ENCODE measurements at regions of chr2 and their contacts with region 1.

Region 1: GRCh38 chr2:209423562-209424198 is at the start of gene MAP2:
- DNase-seq: peak; percentile 96
- H3K4me3 ChIP-seq: peak within 1 kb of the TSS; percentile 93 to 94
- H3K27ac ChIP-seq: peak within 1 kb of the TSS; percentile 24 to 53; a peak in 2 of 4 replicates
- H3K4me1 ChIP-seq: peaks cover 0 to 4% of the 10 kb centered on the region in 2 experiments; a peak in 3 of 4 replicates
- H3K27me3 ChIP-seq: no peaks in the 10 kb centered on the region
- CTCF ChIP-seq: peak; percentile 66
- EP300 ChIP-seq: no peak; a peak in 1 of 4 replicates
- RAD21 ChIP-seq: peak; percentile 63
- polyA plus RNA-seq, gene MAP2: 7.8 and 11.1 TPM in 2 replicates

Region 2: DNA sequence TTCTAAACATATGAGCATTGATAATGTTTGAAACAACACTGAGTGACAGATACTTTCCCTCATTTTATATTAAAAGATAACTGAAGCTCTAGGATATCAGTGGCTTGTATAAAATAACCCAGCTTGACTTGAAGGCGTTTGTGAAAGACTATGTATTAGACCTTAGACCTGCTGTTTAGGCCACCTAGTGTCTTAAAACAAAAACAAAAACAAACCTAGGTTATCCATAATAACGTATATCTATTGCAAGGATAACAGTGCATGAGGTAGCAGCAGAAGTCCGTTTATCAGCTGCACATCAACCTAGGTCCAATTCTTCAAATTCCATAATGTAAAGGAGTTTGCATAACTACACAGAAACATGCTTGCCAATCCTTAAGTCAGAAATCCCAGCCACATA is 79.3 kb before region 1 on chr2:
- CTCF ChIA-PET with region 1: interaction called, 12 read pairs
- POLR2A ChIA-PET with region 1: no interaction called
- DNase-seq: no peak
- H3K4me3 ChIP-seq: no peak overlapping the region
- H3K27ac ChIP-seq: no peak overlapping the region
- H3K4me1 ChIP-seq: no peaks in the 10 kb centered on the region; a peak in 2 of 4 replicates
- H3K27me3 ChIP-seq: no peaks in the 10 kb centered on the region
- CTCF ChIP-seq: no peak
- EP300 ChIP-seq: no peak
- RAD21 ChIP-seq: no peak

Region 3: DNA sequence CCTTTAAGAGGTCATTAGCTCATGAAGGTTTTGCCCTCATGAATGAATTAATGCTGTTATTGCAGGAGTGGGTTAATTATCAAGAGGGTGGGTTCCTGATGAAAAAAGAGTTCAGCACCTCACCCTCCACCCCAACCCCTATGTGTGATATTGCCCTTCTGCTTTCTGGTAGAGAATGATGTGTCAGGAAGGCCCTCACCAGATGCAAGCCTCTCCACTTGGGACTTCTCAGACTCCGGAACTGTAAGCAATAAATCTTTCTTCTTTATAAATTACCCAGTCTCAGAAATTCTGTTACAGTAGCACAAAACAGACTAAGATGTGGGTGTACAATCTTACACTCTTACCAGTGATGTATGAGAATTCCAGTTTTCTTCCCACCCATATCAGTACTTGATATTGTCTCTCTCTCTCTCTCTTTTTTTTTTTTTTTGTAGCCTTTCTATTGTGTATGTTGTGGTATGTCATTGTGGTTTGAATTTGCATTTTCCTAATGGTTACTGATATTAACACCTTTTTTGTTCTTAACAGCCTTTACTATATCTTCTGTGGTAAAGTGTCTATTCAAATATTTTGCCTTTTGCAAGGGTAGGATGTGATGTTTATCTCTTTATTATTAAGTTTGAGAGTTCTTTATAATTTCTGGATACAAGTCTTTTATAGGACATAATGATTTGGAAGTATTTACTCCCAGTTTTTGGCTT is 10.2 kb before region 1 on chr2:
- CTCF ChIA-PET with region 1: interaction called, 20 read pairs
- POLR2A ChIA-PET with region 1: no interaction called
- DNase-seq: no peak
- H3K4me3 ChIP-seq: no peak overlapping the region
- H3K27ac ChIP-seq: no peak overlapping the region
- H3K4me1 ChIP-seq: no peaks in the 10 kb centered on the region
- H3K27me3 ChIP-seq: no peaks in the 10 kb centered on the region
- CTCF ChIP-seq: no peak
- EP300 ChIP-seq: no peak
- RAD21 ChIP-seq: no peak

Region 4: GRCh38 chr2:209451209-209451834 is 27.6 kb after region 1 on chr2:
- CTCF ChIA-PET with region 1: interaction called, 11 read pairs
- POLR2A ChIA-PET with region 1: no interaction called
- DNase-seq: no peak
- H3K4me3 ChIP-seq: no peak overlapping the region
- H3K27ac ChIP-seq: no peak overlapping the region
- H3K4me1 ChIP-seq: no peaks in the 10 kb centered on the region; a peak in 1 of 4 replicates
- H3K27me3 ChIP-seq: no peaks in the 10 kb centered on the region
- CTCF ChIP-seq: no peak
- EP300 ChIP-seq: no peak
- RAD21 ChIP-seq: no peak

Region 5: DNA sequence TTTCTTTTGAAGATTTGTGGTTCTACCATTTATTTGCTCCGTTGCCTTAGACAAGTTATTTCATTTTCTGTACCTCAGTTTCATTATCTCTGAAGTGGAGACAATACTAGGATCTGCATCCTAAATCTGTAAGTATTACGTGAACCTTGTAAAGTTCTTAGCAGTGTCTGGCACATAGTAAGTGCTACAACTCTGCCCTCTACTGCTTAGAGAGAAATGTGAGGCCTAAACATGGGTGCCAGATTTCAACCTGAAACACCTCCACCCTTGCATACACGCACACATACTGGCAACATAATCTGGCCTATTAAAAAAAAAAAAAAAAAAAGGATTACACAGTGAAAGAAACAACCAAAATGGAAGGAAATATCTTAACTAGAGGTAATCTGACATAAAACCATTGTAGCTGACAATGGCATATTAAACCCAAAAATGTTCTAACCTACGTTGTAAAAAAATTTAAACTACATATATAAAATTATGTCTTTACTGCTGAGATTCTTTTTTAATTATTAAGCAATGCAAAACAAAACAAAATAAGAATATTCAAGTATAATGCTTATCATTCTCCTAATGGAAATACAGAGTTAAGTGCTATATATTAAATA is 132.8 kb after region 1 on chr2:
- CTCF ChIA-PET with region 1: interaction called, 22 read pairs
- POLR2A ChIA-PET with region 1: interaction called, 3 read pairs
- DNase-seq: peak; percentile 27
- H3K4me3 ChIP-seq: no peak overlapping the region
- H3K27ac ChIP-seq: no peak overlapping the region
- H3K4me1 ChIP-seq: no peaks in the 10 kb centered on the region
- H3K27me3 ChIP-seq: no peaks in the 10 kb centered on the region
- CTCF ChIP-seq: peak; percentile 72
- EP300 ChIP-seq: no peak
- RAD21 ChIP-seq: peak; percentile 77

Region 6: DNA sequence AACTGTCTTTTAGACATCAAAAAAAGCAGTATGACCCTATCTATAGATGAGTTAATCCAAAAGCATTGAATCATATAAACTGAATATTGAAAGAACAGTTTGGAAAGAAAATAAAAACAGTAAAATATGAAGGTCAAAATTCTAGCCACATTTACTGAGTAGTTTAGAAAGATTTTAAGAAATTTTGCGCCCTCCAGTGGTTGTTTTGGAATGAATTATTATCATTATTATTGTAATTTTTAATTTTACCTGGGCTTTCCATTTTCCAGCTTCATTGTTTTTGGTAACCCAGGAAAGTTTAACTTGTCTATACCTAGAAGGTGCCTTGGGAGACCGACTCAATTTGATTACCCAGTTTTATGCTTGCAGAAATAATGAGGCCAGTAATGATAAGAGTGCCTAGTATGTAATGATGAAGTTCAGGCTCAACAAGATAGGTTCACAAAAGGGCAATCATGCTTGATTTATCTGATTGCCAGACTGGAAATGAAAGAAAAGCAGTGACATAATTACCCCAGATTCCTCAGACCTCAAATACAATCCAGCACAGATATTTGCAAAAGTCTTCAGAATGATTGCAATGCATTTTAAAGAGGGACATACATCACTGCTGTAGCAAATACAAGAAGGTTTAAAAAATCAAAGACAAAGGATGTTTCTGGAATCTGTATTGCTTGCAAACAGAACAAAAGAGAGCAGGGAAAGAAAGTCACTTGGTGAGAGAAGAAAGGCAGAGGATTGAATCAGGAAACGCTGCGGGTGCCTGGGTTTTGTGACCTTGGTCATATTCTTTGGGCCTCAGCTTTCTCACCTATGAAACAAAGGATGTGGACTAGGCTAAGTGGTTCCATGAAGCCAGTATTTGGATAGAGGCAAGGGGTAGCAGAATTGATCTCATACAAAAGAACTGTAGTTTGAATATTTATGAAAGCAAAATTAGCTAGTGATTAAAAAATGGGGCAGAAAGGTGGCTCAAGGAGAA is 154.0 kb after region 1 on chr2:
- CTCF ChIA-PET with region 1: interaction called, 76 read pairs
- POLR2A ChIA-PET with region 1: interaction called, 8 read pairs
- DNase-seq: no peak
- H3K4me3 ChIP-seq: no peak overlapping the region; a peak in 1 of 4 replicates
- H3K27ac ChIP-seq: peak overlapping the region in 1 of 2 experiments; percentile 94; a peak in 2 of 4 replicates
- H3K4me1 ChIP-seq: peaks cover 4 to 14% of the 10 kb centered on the region in 2 experiments; a peak in 3 of 4 replicates
- H3K27me3 ChIP-seq: no peaks in the 10 kb centered on the region
- CTCF ChIP-seq: peak; percentile 67
- EP300 ChIP-seq: no peak
- RAD21 ChIP-seq: peak; percentile 54

Region 7: DNA sequence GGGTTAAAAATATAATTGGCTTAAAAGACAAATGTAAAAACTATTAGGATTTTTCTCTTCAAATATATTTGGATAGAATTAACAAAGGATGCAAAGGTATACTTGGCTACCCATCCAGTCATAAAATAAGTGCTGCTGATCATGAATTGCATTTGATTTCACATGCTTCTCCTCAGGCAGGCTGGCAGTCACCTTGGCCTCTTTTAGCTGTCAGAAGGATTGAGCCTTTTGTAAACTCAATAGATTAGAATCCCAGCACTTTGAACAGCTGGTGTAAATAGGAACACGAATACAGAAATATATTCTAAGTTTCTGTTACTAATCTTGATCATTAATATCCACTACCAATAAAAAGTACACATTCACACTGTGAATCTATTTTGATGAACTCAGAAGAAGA is 178.6 kb after region 1 on chr2:
- CTCF ChIA-PET with region 1: no interaction called
- POLR2A ChIA-PET with region 1: no interaction called
- DNase-seq: no peak
- H3K4me3 ChIP-seq: no peak overlapping the region
- H3K27ac ChIP-seq: no peak overlapping the region
- H3K4me1 ChIP-seq: peaks cover 0 to 9% of the 10 kb centered on the region in 2 experiments; a peak in 2 of 4 replicates
- H3K27me3 ChIP-seq: no peaks in the 10 kb centered on the region
- CTCF ChIP-seq: no peak
- EP300 ChIP-seq: no peak
- RAD21 ChIP-seq: no peak

Region 8: DNA sequence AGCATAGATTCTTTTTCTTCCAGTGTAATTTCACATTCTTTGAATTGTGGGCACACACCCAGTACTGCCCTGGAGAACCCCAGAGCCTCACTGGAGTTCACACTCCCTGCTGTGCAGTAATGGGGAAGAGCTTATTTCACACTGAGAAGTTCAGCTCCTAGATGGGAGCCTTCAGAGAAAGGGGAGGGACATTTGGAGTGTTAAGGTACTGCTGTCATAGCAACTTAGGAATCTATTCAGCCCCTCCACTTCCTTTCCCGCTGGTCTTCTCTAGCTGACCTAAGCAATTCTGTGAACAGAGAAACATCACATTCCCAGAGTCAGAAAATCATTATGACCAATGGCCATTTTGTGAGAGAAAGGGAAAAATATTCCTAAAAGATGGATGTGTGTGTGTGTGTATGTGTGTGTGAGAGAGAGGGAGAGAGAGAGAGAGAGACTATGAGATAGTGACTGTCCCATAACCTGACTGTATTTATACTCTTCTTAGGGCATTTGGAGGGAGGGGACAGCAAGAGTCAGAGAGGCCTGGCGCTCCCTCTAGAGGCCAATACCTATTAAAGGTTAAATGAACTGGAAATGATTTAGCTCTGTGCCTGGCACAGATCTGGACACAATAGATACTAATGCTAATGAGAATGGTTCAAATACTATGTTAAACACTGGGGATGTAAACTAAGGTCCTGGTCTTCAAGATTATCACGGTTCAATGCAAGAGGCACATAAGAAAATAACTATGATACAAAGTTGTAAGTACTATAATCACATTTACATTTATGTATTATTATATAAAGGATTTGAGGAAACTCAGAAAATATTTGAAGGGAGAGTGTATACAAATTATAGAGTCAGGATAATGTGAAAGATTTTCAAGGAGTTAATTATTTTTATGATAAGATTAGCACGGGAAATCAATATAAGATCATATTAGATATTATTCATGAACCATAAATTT is 537.3 kb after region 1 on chr2:
- CTCF ChIA-PET with region 1: interaction called, 26 read pairs
- POLR2A ChIA-PET with region 1: no interaction called
- DNase-seq: peak; percentile 48
- H3K4me3 ChIP-seq: no peak overlapping the region; a peak in 1 of 4 replicates
- H3K27ac ChIP-seq: no peak overlapping the region
- H3K4me1 ChIP-seq: no peaks in the 10 kb centered on the region; a peak in 1 of 4 replicates
- H3K27me3 ChIP-seq: no peaks in the 10 kb centered on the region
- CTCF ChIP-seq: peak; percentile 81
- EP300 ChIP-seq: no peak
- RAD21 ChIP-seq: peak; percentile 80

Measured in SK-N-SH (cell line).